ENCODE measurements at regions of chr10 and their contacts with region 1.

Region 1: DNA sequence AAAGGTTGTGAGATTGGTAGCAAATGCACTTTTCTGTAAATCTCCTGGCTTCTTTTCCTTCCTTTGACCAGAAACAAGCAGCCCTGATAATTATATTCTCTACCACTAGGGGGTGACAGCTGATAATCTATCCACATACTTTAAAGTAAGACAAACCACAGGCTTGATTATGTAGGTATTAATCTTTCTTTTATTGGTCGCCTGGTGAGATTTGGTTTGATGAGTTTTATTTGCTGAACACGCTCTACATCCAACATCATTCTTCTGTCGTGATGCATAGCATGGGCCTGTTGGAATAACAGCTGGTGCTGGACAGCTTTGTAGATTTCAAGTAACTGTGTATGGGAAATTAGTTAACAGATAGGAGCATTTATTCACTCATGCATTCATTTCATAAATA is 63.5 kb downstream of the ZNF365 start:
- DNase-seq: no peak
- ATAC-seq: peak; percentile 70
- H3K4me3 Mint-ChIP-seq: no peak overlapping the region
- H3K27ac Mint-ChIP-seq: no peak overlapping the region
- H3K4me1 Mint-ChIP-seq: peaks cover 2% of the 10 kb centered on the region
- H3K27me3 Mint-ChIP-seq: no peaks in the 10 kb centered on the region
- CTCF ChIP-seq: peak; percentile 90

Region 2: DNA sequence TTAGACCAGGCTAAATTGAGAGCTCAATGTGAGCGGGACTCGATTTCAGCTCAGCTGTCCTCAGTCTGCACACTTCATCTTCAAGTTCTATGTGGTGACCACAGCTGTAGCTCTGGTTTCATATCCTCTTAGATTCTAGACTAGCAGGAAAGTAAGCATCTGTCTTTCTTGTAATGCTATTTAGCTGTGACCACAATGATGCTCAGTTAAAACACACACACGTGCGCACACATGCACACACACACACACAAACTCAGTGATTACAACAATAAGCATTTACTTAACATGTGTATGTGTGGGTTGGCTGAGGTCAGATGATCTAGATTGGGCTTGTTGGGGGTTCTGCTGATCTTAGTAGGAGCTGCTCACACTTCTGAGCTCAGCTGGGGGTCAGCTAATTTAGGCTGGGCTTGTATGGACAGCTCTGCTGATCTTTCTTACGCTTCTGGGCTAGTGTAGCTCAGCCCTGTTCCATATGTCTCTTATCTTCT is 19.0 kb after region 1 on chr10:
- CTCF ChIA-PET with region 1: interaction called, 20 read pairs
- POLR2A ChIA-PET with region 1: interaction called, 3 read pairs
- intact Hi-C with region 1: loop called (anchors 1 kb)
- DNase-seq: peak; percentile 22
- ATAC-seq: peak; percentile 93
- H3K4me3 Mint-ChIP-seq: peak overlapping the region; percentile 53
- H3K27ac Mint-ChIP-seq: peak overlapping the region; percentile 74
- H3K4me1 Mint-ChIP-seq: peaks cover 39% of the 10 kb centered on the region
- H3K27me3 Mint-ChIP-seq: no peaks in the 10 kb centered on the region
- CTCF ChIP-seq: no peak

Region 3: GRCh38 chr10:62492012-62492869 is 54.5 kb after region 1 on chr10:
- CTCF ChIA-PET with region 1: interaction called, 18 read pairs
- POLR2A ChIA-PET with region 1: no interaction called
- intact Hi-C with region 1: loop called (anchors 1 kb)
- DNase-seq: no peak
- ATAC-seq: peak; percentile 49
- H3K4me3 Mint-ChIP-seq: no peak overlapping the region
- H3K27ac Mint-ChIP-seq: no peak overlapping the region
- H3K4me1 Mint-ChIP-seq: peaks cover 27% of the 10 kb centered on the region
- H3K27me3 Mint-ChIP-seq: peaks cover 4% of the 10 kb centered on the region
- CTCF ChIP-seq: no peak

Region 4: DNA sequence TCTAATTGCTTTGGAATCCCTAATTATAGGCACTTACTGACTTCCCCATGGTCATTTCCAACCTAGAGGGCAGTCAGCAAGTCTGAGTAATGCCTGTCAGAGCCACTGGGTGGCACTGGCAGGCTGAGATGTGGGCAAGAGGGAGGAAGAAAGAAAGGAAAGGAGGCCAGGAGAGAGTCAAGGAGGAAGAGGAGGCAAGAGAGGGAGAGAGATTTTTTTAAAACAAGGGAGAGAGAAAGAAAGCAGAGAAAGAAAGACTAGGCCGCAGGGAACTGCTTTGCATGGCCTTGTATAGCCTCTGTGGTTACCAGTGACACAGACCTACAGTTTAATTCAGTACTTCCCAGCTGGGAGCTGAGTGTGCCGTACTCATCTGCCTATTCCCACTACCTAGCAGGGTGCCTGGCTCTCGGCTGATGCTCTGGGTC is 156.4 kb after region 1 on chr10:
- CTCF ChIA-PET with region 1: interaction called, 8 read pairs
- POLR2A ChIA-PET with region 1: no interaction called
- intact Hi-C with region 1: loop called (anchors 1 kb)
- DNase-seq: peak; percentile 41
- ATAC-seq: peak; percentile 88
- H3K4me3 Mint-ChIP-seq: no peak overlapping the region
- H3K27ac Mint-ChIP-seq: no peak overlapping the region
- H3K4me1 Mint-ChIP-seq: peaks cover 16% of the 10 kb centered on the region
- H3K27me3 Mint-ChIP-seq: no peaks in the 10 kb centered on the region
- CTCF ChIP-seq: peak; percentile 74

Region 5: GRCh38 chr10:62692085-62692484 is 254.4 kb after region 1 on chr10:
- CTCF ChIA-PET with region 1: no interaction called
- POLR2A ChIA-PET with region 1: no interaction called
- intact Hi-C with region 1: no loop called
- DNase-seq: no peak
- ATAC-seq: no peak
- H3K4me3 Mint-ChIP-seq: no peak overlapping the region
- H3K27ac Mint-ChIP-seq: no peak overlapping the region
- H3K4me1 Mint-ChIP-seq: peaks cover 52% of the 10 kb centered on the region
- H3K27me3 Mint-ChIP-seq: no peaks in the 10 kb centered on the region
- CTCF ChIP-seq: no peak

Region 6: DNA sequence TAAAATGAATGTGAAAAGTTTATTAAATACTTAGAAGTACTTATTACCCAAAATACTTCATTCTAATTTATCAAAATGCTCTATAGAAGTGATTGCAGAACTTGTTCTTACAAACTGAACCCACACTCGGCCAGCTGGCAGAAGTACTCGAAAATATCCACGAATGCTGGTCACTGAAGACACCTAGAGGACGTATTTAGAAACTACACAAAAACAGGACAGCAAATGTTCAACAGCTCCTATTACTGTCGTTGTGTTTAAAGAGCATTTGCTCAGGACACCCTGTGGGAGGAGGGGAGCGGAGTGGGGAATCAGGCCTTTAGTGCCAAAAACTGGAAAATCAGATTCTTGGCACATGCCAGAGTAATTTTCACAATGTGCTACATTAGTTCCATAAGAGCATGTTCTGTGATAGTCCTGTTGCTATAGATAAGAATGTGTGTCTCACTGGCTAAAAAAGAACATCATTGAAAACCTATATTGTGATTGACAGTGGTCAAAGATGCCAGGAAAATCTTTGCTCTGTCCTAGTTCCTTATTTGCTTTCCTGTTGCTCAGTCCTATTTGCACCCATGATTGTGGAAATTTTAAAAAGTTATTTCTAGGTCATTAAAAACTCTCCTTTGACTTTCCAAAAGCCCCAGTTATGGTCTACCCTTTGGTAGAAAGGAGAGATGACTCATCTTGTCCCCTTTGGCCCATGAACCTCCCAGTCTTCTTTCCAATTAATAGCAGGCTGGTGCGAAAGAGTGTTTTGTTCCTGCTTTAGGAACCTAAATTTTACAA is 646.4 kb after region 1 on chr10:
- CTCF ChIA-PET with region 1: interaction called, 41 read pairs
- POLR2A ChIA-PET with region 1: no interaction called
- intact Hi-C with region 1: loop called (anchors 1 kb)
- DNase-seq: no peak
- ATAC-seq: peak; percentile 77
- H3K4me3 Mint-ChIP-seq: no peak overlapping the region
- H3K27ac Mint-ChIP-seq: no peak overlapping the region
- H3K4me1 Mint-ChIP-seq: no peaks in the 10 kb centered on the region
- H3K27me3 Mint-ChIP-seq: peaks cover 9% of the 10 kb centered on the region
- CTCF ChIP-seq: peak; percentile 53

Measured in activated B cell treated with CpG ODN at 0.5 μM for 24 hours (primary cell).